CD8-positive, alpha-beta T cell (primary cell): ENCODE measurements at regions of chr5 and their contacts with region 1.

Region 1: GRCh38 chr5:97162045-97162444 is 19.6 kb upstream of the LIX1 start:
- DNase-seq: peak in 7 of 9 experiments; percentile 21 to 79 (median 54)
- ATAC-seq: peak; percentile 58
- H3K4me3 ChIP-seq: no peak overlapping the region
- H3K4me3 Mint-ChIP-seq: no peak overlapping the region
- H3K27ac ChIP-seq: no peak overlapping the region
- H3K27ac Mint-ChIP-seq: no peak overlapping the region
- H3K4me1 ChIP-seq: no peaks in the 10 kb centered on the region
- H3K4me1 Mint-ChIP-seq: peaks cover 10% of the 10 kb centered on the region
- H3K27me3 ChIP-seq: no peaks in the 10 kb centered on the region
- H3K27me3 Mint-ChIP-seq: no peaks in the 10 kb centered on the region
- CTCF ChIP-seq: peak; percentile 93

Region 2: GRCh38 chr5:96614110-96614691 is 547.8 kb before region 1 on chr5:
- CTCF ChIA-PET with region 1: interaction called, 26 read pairs
- POLR2A ChIA-PET with region 1: no interaction called
- intact Hi-C with region 1: loop called (anchors 2 kb)
- DNase-seq: peak in 8 of 9 experiments; percentile 5 to 73 (median 44)
- ATAC-seq: peak; percentile 61
- H3K4me3 ChIP-seq: no peak overlapping the region
- H3K4me3 Mint-ChIP-seq: no peak overlapping the region
- H3K27ac ChIP-seq: no peak overlapping the region
- H3K27ac Mint-ChIP-seq: no peak overlapping the region
- H3K4me1 ChIP-seq: no peaks in the 10 kb centered on the region
- H3K4me1 Mint-ChIP-seq: peaks cover 4% of the 10 kb centered on the region
- H3K27me3 ChIP-seq: no peaks in the 10 kb centered on the region
- H3K27me3 Mint-ChIP-seq: peaks cover 10% of the 10 kb centered on the region
- CTCF ChIP-seq: peak; percentile 64

Region 3: GRCh38 chr5:96743065-96743768 is 418.8 kb before region 1 on chr5:
- CTCF ChIA-PET with region 1: interaction called, 54 read pairs
- POLR2A ChIA-PET with region 1: no interaction called
- intact Hi-C with region 1: no loop called
- DNase-seq: peak in 1 of 9 experiments; percentile 21
- ATAC-seq: no peak
- H3K4me3 ChIP-seq: no peak overlapping the region
- H3K4me3 Mint-ChIP-seq: no peak overlapping the region
- H3K27ac ChIP-seq: peak overlapping the region in 1 of 2 experiments; percentile 18
- H3K27ac Mint-ChIP-seq: peak overlapping the region; percentile 6
- H3K4me1 ChIP-seq: no peaks in the 10 kb centered on the region
- H3K4me1 Mint-ChIP-seq: no peaks in the 10 kb centered on the region
- H3K27me3 ChIP-seq: no peaks in the 10 kb centered on the region
- H3K27me3 Mint-ChIP-seq: no peaks in the 10 kb centered on the region
- CTCF ChIP-seq: no peak

Region 4: DNA sequence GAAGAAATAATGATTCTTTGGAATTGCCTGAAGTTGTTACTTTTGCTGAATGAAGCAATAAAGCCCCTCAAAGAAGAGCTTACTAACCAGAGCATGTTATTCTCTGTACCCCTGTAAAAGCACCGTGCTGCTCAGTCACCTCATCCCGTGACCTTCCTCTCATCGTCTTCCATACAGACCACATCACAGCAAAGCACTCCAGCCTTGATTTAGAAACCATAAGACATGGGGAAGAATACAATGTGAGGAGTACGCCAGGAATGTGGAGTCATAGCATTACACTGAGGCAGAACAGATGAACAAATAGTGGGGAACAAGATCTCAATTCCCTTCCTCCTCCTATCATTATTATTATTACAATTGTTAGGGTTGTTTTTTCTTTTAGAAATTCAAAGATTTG is 403.4 kb before region 1 on chr5:
- CTCF ChIA-PET with region 1: interaction called, 37 read pairs
- POLR2A ChIA-PET with region 1: no interaction called
- intact Hi-C with region 1: no loop called
- DNase-seq: no peak
- ATAC-seq: no peak
- H3K4me3 ChIP-seq: no peak overlapping the region
- H3K4me3 Mint-ChIP-seq: no peak overlapping the region
- H3K27ac ChIP-seq: no peak overlapping the region
- H3K27ac Mint-ChIP-seq: peak overlapping the region; percentile 53
- H3K4me1 ChIP-seq: no peaks in the 10 kb centered on the region
- H3K4me1 Mint-ChIP-seq: peaks cover 12% of the 10 kb centered on the region
- H3K27me3 ChIP-seq: no peaks in the 10 kb centered on the region
- H3K27me3 Mint-ChIP-seq: no peaks in the 10 kb centered on the region
- CTCF ChIP-seq: no peak

Region 5: GRCh38 chr5:96876292-96876850 is 285.7 kb before region 1 on chr5 and contains the start of gene ERAP2:
- CTCF ChIA-PET with region 1: interaction called, 123 read pairs
- POLR2A ChIA-PET with region 1: no interaction called
- intact Hi-C with region 1: no loop called
- DNase-seq: peak in 2 of 9 experiments; percentile 63 to 79
- ATAC-seq: peak; percentile 80
- H3K4me3 ChIP-seq: peak within 1 kb of the TSS; percentile 74 to 76
- H3K4me3 Mint-ChIP-seq: peak within 1 kb of the TSS; percentile 96
- H3K27ac ChIP-seq: peak within 1 kb of the TSS; percentile 75 to 78
- H3K27ac Mint-ChIP-seq: peak within 1 kb of the TSS; percentile 95
- H3K4me1 ChIP-seq: peaks cover 38% of the 10 kb centered on the region
- H3K4me1 Mint-ChIP-seq: peaks cover 71% of the 10 kb centered on the region
- H3K27me3 ChIP-seq: no peaks in the 10 kb centered on the region
- H3K27me3 Mint-ChIP-seq: no peaks in the 10 kb centered on the region
- CTCF ChIP-seq: no peak
- total RNA-seq, gene ERAP2: 46.5 to 49.9 TPM

Region 6: GRCh38 chr5:97009212-97009898 is 152.7 kb before region 1 on chr5:
- CTCF ChIA-PET with region 1: interaction called, 4 read pairs
- POLR2A ChIA-PET with region 1: no interaction called
- intact Hi-C with region 1: loop called in 1 of 2 experiments (anchors 5 kb)
- DNase-seq: peak in 2 of 9 experiments; percentile 51 to 70
- ATAC-seq: peak; percentile 58
- H3K4me3 ChIP-seq: no peak overlapping the region
- H3K4me3 Mint-ChIP-seq: peak overlapping the region; percentile 32
- H3K27ac ChIP-seq: no peak overlapping the region
- H3K27ac Mint-ChIP-seq: peak overlapping the region; percentile 84
- H3K4me1 ChIP-seq: peaks cover 23% of the 10 kb centered on the region
- H3K4me1 Mint-ChIP-seq: peaks cover 42% of the 10 kb centered on the region
- H3K27me3 ChIP-seq: no peaks in the 10 kb centered on the region
- H3K27me3 Mint-ChIP-seq: no peaks in the 10 kb centered on the region
- CTCF ChIP-seq: no peak

Region 7: DNA sequence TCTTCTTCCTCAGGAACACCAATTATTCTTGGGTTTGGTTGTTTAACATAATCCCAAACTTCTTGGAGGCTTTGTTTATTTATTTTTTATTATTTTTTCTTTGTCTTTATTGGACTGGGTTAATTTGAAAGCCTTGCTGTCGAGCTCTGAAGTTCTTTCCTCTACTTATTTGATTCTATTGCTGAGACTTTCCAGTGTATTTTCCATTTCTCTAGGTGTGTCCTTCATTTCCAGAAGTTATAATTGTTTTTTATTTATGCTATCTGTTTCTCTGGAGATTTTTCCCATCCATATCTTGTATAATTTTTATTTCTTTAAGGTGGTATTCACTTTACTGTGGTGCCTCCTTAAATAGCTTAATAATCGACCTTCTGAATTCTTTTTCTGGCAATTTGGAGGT is 29.8 kb after region 1 on chr5:
- CTCF ChIA-PET with region 1: no interaction called
- POLR2A ChIA-PET with region 1: no interaction called
- intact Hi-C with region 1: no loop called
- DNase-seq: no peak
- ATAC-seq: no peak
- H3K4me3 ChIP-seq: no peak overlapping the region
- H3K4me3 Mint-ChIP-seq: no peak overlapping the region
- H3K27ac ChIP-seq: no peak overlapping the region
- H3K27ac Mint-ChIP-seq: no peak overlapping the region
- H3K4me1 ChIP-seq: peaks cover 8% of the 10 kb centered on the region
- H3K4me1 Mint-ChIP-seq: peaks cover 6% of the 10 kb centered on the region
- H3K27me3 ChIP-seq: no peaks in the 10 kb centered on the region
- H3K27me3 Mint-ChIP-seq: peaks cover 3% of the 10 kb centered on the region
- CTCF ChIP-seq: no peak

Region 8: DNA sequence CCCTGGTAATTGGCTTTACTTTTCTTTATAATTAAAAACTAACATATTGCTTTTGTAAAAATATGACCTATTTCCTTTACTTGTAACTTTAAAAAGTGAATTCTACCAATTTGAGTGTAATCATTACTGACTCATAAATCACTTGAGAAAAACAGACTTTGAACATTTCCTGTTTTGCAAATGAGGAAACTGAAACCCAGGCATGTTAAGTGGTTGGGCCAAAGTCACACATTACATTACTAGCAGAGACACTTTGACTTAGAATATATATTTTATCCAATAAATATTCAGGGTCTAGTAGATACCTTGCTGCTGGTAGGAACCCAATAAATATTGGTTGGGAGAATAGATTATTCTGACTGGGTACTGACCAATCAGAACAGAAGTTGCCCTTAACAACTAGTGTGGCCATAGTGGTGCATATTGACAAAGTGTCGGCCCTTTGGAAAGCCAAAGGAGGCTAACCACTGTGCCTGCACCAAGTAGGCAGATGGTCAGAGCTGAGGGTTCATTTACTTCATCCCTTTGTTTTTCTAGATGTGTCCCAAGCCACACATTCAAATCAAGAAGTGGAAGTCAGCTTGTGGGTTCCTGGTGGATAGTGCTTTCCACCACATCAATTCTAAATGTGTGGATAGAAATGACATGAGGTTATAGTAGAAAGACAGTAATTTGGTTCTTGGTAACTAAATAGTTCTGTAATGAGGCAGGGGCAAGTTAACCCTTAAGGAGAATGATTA is 386.1 kb after region 1 on chr5:
- CTCF ChIA-PET with region 1: no interaction called
- POLR2A ChIA-PET with region 1: no interaction called
- intact Hi-C with region 1: no loop called
- DNase-seq: peak in 1 of 9 experiments; percentile 8
- ATAC-seq: no peak
- H3K4me3 ChIP-seq: no peak overlapping the region
- H3K4me3 Mint-ChIP-seq: no peak overlapping the region
- H3K27ac ChIP-seq: no peak overlapping the region
- H3K27ac Mint-ChIP-seq: no peak overlapping the region
- H3K4me1 ChIP-seq: peaks cover 5% of the 10 kb centered on the region
- H3K4me1 Mint-ChIP-seq: peaks cover 4% of the 10 kb centered on the region
- H3K27me3 ChIP-seq: no peaks in the 10 kb centered on the region
- H3K27me3 Mint-ChIP-seq: no peaks in the 10 kb centered on the region
- CTCF ChIP-seq: no peak

Region 9: GRCh38 chr5:98443881-98444280 is 1281.8 kb after region 1 on chr5:
- CTCF ChIA-PET with region 1: no interaction called
- POLR2A ChIA-PET with region 1: no interaction called
- intact Hi-C with region 1: no loop called
- DNase-seq: no peak
- ATAC-seq: no peak
- H3K4me3 ChIP-seq: no peak overlapping the region
- H3K4me3 Mint-ChIP-seq: no peak overlapping the region
- H3K27ac ChIP-seq: no peak overlapping the region
- H3K27ac Mint-ChIP-seq: no peak overlapping the region
- H3K4me1 ChIP-seq: no peaks in the 10 kb centered on the region
- H3K4me1 Mint-ChIP-seq: no peaks in the 10 kb centered on the region
- H3K27me3 ChIP-seq: no peaks in the 10 kb centered on the region
- H3K27me3 Mint-ChIP-seq: no peaks in the 10 kb centered on the region
- CTCF ChIP-seq: no peak